Caco-2 (cell line): ENCODE measurements at regions of chr11 and their contacts with region 1.

Region 1: GRCh38 chr11:72814286-72815109 is at the start of gene ATG16L2:
- DNase-seq: peak; percentile 91 to 98
- H3K4me3 ChIP-seq: peak within 1 kb of the TSS; percentile 88
- H3K4me3 Mint-ChIP-seq: peak within 1 kb of the TSS; percentile 98
- H3K27ac Mint-ChIP-seq: peak within 1 kb of the TSS; percentile 97
- H3K4me1 ChIP-seq: no peaks in the 10 kb centered on the region; the same call in 1 of the 2 replicates
- H3K4me1 Mint-ChIP-seq: peaks cover 29% of the 10 kb centered on the region
- H3K27me3 ChIP-seq: no peaks in the 10 kb centered on the region
- H3K27me3 Mint-ChIP-seq: no peaks in the 10 kb centered on the region
- CTCF ChIP-seq: peak; percentile 19 to 41
- total RNA-seq, gene ATG16L2: 19.3 and 25.0 TPM in 2 replicates

Region 2: DNA sequence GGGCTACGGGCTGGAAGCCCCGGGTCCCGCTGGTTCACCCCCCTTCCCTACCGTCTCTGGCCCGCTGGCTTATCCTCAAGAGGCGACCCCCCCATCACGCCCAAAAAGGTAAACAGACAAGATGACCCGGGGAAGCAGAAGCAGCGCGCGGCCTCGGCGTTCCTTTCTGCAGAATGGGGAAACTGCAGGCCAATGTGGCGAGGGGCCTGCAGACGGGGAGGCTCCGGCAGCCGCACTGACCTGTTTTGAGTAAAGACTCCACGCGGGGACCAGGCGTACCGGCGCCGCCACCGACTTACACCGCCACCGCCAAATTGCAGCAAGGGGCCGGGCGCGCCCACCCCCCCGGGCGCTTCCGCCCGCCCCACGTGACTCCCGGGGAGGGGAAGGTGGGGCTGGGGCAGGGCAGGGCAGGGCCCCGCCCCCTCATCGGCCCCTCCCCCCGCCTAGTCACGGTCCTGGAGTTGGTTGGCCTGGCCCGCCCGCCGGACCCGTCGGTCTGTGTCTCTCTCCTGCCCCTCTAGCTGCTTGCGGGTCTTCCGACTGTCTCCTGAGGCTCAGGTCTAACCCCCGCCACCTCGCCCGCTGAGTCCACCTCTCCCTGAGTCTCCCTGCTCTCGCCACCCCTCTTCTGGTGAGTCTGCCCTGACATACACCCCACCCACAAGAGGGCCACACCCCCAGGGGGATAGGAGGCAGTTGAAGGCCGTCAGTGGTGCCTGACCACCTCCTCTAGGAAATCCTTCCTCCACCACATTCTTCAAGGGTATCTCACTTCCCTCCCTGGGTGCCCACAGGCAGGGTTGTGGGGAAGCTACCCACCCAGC is 62.2 kb before region 1 on chr11 and contains the start of gene ARAP1:
- CTCF ChIA-PET with region 1: interaction called, 3 read pairs
- POLR2A ChIA-PET with region 1: no interaction called
- intact Hi-C with region 1: loop called (anchors 1 kb)
- DNase-seq: peak; percentile 89 to 90
- H3K4me3 ChIP-seq: peak within 1 kb of the TSS; percentile 75
- H3K4me3 Mint-ChIP-seq: peak within 1 kb of the TSS; percentile 89
- H3K27ac Mint-ChIP-seq: peak within 1 kb of the TSS; percentile 94
- H3K4me1 ChIP-seq: peaks cover 30% of the 10 kb centered on the region
- H3K4me1 Mint-ChIP-seq: peaks cover 53% of the 10 kb centered on the region
- H3K27me3 ChIP-seq: no peaks in the 10 kb centered on the region
- H3K27me3 Mint-ChIP-seq: no peaks in the 10 kb centered on the region
- CTCF ChIP-seq: peak in 1 of 2 experiments; percentile 28
- total RNA-seq, gene ARAP1: 87.1 and 102 TPM in 2 replicates

Region 3: GRCh38 chr11:72764503-72764902 is 50.0 kb before region 1 on chr11:
- CTCF ChIA-PET with region 1: interaction called, 3 read pairs
- POLR2A ChIA-PET with region 1: no interaction called
- intact Hi-C with region 1: loop called (anchors 1 kb)
- DNase-seq: peak; percentile 74 to 78
- H3K4me3 ChIP-seq: no peak overlapping the region
- H3K4me3 Mint-ChIP-seq: no peak overlapping the region
- H3K27ac Mint-ChIP-seq: no peak overlapping the region
- H3K4me1 ChIP-seq: peaks cover 32% of the 10 kb centered on the region
- H3K4me1 Mint-ChIP-seq: peaks cover 38% of the 10 kb centered on the region
- H3K27me3 ChIP-seq: no peaks in the 10 kb centered on the region
- H3K27me3 Mint-ChIP-seq: no peaks in the 10 kb centered on the region
- CTCF ChIP-seq: peak; percentile 59 to 80

Region 4: DNA sequence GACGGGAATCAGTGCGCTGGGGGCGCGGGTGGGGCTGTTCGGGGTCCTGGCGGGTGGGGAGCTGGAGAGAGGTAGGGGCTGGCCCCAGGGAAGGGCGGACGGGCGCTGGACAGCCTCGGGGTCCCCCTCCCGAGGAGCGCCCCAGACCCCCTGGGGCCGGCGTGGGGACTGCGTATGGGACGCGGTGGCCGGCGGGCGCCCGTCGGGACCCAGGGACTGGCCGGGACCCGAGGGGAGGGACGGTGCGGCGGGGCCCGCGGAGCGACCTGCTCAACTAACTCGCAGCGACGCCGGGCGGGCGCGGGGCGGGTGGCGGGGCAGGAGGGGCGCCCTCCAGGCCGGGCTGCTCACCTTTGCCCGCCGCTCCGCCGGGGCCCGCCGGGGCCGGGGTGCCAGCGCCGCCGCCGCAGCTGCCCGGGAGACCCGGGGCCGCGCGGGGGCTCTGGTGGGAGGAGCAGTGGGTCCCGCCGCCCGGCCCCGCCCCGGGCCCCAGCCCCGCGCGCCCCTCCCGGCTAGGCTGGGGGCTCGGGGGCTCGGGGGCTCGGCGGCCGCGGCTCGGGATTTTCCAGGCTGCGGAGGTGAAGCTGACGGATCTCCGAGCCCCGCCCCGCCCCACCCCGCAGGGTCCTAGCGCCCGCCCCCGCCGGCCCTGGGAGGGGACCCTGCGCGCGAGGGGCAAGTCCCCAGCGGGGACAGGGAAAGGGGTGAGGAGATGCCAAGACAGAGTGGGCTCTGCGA is 33.0 kb before region 1 on chr11:
- CTCF ChIA-PET with region 1: interaction called, 22 read pairs
- POLR2A ChIA-PET with region 1: interaction called, 6 read pairs
- intact Hi-C with region 1: loop called (anchors 5 kb)
- DNase-seq: peak; percentile 80
- H3K4me3 ChIP-seq: peak overlapping the region; percentile 88
- H3K4me3 Mint-ChIP-seq: peak overlapping the region; percentile 74
- H3K27ac Mint-ChIP-seq: peak overlapping the region; percentile 99
- H3K4me1 ChIP-seq: peaks cover 85% of the 10 kb centered on the region
- H3K4me1 Mint-ChIP-seq: peaks cover 64% of the 10 kb centered on the region
- H3K27me3 ChIP-seq: no peaks in the 10 kb centered on the region
- H3K27me3 Mint-ChIP-seq: no peaks in the 10 kb centered on the region
- CTCF ChIP-seq: peak in 1 of 2 experiments; percentile 23

Region 5: GRCh38 chr11:72787216-72788104 is 27.0 kb before region 1 on chr11:
- CTCF ChIA-PET with region 1: interaction called, 22 read pairs
- POLR2A ChIA-PET with region 1: interaction called, 6 read pairs
- intact Hi-C with region 1: no loop called
- DNase-seq: peak; percentile 90 to 98
- H3K4me3 ChIP-seq: no peak overlapping the region; the same call in 1 of the 2 replicates
- H3K4me3 Mint-ChIP-seq: peak overlapping the region; percentile 50
- H3K27ac Mint-ChIP-seq: peak overlapping the region; percentile 99
- H3K4me1 ChIP-seq: peaks cover 75% of the 10 kb centered on the region
- H3K4me1 Mint-ChIP-seq: peaks cover 67% of the 10 kb centered on the region
- H3K27me3 ChIP-seq: no peaks in the 10 kb centered on the region
- H3K27me3 Mint-ChIP-seq: no peaks in the 10 kb centered on the region
- CTCF ChIP-seq: peak; percentile 65 to 72

Region 6: GRCh38 chr11:72793425-72794367 is 20.8 kb before region 1 on chr11 and contains the start of gene STARD10:
- CTCF ChIA-PET with region 1: interaction called, 30 read pairs
- POLR2A ChIA-PET with region 1: interaction called, 3 read pairs
- intact Hi-C with region 1: loop called (anchors 1 kb)
- DNase-seq: peak; percentile 97 to 99
- H3K4me3 ChIP-seq: peak within 1 kb of the TSS; percentile 66
- H3K4me3 Mint-ChIP-seq: peak within 1 kb of the TSS; percentile 82
- H3K27ac Mint-ChIP-seq: peak within 1 kb of the TSS; percentile 91
- H3K4me1 ChIP-seq: peaks cover 26% of the 10 kb centered on the region
- H3K4me1 Mint-ChIP-seq: peaks cover 21% of the 10 kb centered on the region
- H3K27me3 ChIP-seq: no peaks in the 10 kb centered on the region
- H3K27me3 Mint-ChIP-seq: no peaks in the 10 kb centered on the region
- CTCF ChIP-seq: peak; percentile 99 to 100
- total RNA-seq, gene STARD10: 492 and 501 TPM in 2 replicates

Region 7: DNA sequence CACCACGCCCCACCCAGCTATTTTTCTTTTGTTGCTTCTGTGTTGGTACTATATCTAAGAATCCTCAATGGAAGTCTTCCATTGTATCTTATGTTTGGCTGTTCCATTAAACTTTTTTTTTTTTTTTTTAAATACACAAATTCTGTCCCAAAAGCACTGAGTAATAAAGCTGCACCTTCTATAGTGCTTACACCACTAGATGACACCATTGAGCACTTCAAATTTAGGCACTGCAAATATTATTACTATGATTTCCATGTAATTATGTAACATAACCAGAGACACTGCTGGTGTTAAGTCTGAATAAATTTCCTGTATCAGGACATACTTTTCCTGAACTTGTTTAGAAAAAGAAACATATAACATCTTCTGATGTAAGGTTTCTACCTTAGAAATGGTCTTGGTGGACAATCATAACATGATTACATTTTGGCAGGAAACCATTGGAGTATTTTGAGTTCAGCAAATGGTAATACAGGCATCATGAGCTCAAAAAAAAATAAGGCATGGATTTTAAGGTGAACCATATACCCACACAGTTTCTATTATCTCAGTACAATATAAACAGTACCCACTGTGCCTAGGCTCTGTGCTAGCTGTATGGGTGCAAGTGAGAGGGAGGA is 110.2 kb after region 1 on chr11:
- CTCF ChIA-PET with region 1: no interaction called
- POLR2A ChIA-PET with region 1: no interaction called
- intact Hi-C with region 1: no loop called
- DNase-seq: peak in 1 of 2 experiments; percentile 40
- H3K4me3 ChIP-seq: no peak overlapping the region
- H3K4me3 Mint-ChIP-seq: no peak overlapping the region
- H3K27ac Mint-ChIP-seq: no peak overlapping the region
- H3K4me1 ChIP-seq: no peaks in the 10 kb centered on the region
- H3K4me1 Mint-ChIP-seq: no peaks in the 10 kb centered on the region
- H3K27me3 ChIP-seq: no peaks in the 10 kb centered on the region
- H3K27me3 Mint-ChIP-seq: no peaks in the 10 kb centered on the region
- CTCF ChIP-seq: peak; percentile 63 to 73